HEK293 (cell line): ENCODE measurements at regions of chr16 and their contacts with region 1.

Region 1: GRCh38 chr16:88811769-88812512 is at the start of gene APRT:
- H3K4me3 ChIP-seq: peak within 1 kb of the TSS; percentile 66
- H3K27ac ChIP-seq: peak within 1 kb of the TSS; percentile 87
- H3K4me1 ChIP-seq: peaks cover 3% of the 10 kb centered on the region; the same call in 1 of the 2 replicates
- CTCF ChIP-seq: peak; percentile 44

Region 2: DNA sequence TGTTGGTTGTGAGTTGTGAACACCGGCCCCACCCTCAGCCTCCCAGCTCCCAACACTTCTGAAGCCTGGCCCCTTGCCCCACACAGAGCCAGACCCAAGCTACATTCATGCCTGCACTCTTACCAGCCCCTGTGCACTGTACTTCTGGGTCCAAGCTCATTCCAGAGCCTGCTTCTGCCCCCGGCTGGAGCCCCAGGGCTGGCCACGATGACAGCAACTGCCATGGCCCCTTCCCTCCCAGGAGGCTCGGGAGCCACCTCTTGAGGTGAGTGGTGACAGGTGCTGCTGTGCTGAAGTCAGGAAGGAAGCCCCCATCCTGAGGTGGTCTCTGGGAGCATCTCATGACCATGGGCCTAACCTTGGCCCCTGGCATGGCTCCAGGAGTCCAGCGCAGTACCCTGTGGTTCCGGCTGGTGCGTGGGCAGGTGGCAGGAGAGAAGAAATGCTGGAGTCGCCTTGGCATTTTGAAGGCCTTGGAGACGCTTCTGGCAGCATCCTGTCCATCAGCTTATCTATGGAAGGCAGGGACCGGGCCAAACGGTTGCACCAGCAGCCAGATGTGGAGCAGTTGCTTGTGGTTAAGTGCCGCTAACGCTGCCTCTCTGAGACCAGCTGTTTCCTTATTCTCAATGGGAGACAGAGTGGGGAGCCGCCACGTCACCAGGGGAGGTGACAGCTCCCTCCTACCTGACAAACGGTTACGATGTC is 12.2 kb before region 1 on chr16:
- CTCF ChIA-PET with region 1: no interaction called
- POLR2A ChIA-PET with region 1: interaction called, 33 read pairs
- H3K4me3 ChIP-seq: no peak overlapping the region
- H3K27ac ChIP-seq: no peak overlapping the region
- H3K4me1 ChIP-seq: no peaks in the 10 kb centered on the region
- CTCF ChIP-seq: no peak

Region 3: GRCh38 chr16:88856828-88857733 is 45.1 kb after region 1 on chr16 and contains the starts of genes GALNS and TRAPPC2L:
- CTCF ChIA-PET with region 1: interaction called, 8 read pairs
- POLR2A ChIA-PET with region 1: interaction called, 23 read pairs
- H3K4me3 ChIP-seq: peak within 1 kb of the TSS; percentile 94
- H3K27ac ChIP-seq: peak within 1 kb of the TSS; percentile 10; the same call in 1 of the 2 replicates
- H3K4me1 ChIP-seq: no peaks in the 10 kb centered on the region
- CTCF ChIP-seq: no peak

Region 4: DNA sequence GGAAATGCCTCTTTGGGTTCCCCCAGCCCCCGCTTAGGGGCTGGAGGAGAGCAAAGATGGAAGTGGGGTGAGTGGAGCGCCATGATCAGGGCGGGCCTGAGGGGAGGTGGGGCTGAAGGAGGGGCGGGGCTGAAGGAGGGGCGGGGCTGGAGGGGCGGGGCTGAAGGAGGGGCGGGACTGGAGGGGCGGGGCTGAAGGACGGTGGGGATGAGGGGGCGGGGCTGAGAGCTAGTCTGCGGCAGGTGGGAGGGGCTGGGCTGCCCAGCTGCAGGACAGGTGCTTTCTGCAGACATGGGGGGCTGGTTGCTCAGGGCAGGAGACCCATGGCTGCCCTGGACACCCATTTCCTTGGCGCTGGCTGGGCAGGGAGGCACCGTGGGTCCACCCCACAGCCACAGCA is 93.6 kb after region 1 on chr16:
- CTCF ChIA-PET with region 1: no interaction called
- POLR2A ChIA-PET with region 1: no interaction called
- H3K4me3 ChIP-seq: no peak overlapping the region
- H3K27ac ChIP-seq: no peak overlapping the region
- H3K4me1 ChIP-seq: no peaks in the 10 kb centered on the region
- CTCF ChIP-seq: no peak

Region 5: DNA sequence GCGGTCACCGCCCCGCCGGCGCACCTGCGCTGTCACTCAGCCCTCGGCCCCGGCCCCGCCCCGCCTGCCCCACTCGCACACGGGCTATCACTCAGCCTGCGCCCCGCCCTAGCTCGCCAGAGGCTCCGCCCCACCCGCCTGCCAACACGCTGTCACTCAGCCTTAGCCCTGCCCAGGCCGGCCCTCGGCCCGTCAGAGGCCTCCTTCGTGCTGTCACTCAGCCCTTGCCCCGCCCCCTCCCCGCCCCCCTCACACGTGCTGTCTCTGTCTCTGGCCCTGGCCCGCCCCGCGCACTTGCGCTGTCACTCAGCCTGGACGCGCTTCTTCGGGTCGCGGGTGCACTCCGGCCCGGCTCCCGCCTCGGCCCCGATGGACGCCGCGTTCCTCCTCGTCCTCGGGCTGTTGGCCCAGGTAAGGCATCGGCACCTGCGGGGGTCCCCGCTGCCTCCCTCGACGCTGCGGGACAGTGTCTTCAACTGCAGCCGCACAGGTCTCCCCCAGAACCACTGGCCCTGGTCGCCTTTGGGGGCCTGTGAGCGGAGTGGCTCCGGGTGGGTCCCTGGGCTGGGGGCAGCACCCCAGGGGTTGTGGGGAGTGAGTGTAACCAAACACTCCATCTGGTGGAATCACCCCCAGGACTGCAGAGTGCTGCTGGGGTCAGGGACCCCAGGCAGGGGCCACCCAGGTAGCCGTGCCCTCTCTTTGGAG is 359.7 kb after region 1 on chr16 and contains the start of gene CDH15:
- CTCF ChIA-PET with region 1: interaction called, 19 read pairs
- POLR2A ChIA-PET with region 1: interaction called, 15 read pairs
- H3K4me3 ChIP-seq: no peak within 1 kb of the TSS
- H3K27ac ChIP-seq: no peak within 1 kb of the TSS
- H3K4me1 ChIP-seq: peaks cover 3% of the 10 kb centered on the region; the same call in 1 of the 2 replicates
- CTCF ChIP-seq: no peak